Colonic mucosa (tissue), 4 donors: ENCODE measurements at regions of chr1 and their contacts with region 1.

Region 1: DNA sequence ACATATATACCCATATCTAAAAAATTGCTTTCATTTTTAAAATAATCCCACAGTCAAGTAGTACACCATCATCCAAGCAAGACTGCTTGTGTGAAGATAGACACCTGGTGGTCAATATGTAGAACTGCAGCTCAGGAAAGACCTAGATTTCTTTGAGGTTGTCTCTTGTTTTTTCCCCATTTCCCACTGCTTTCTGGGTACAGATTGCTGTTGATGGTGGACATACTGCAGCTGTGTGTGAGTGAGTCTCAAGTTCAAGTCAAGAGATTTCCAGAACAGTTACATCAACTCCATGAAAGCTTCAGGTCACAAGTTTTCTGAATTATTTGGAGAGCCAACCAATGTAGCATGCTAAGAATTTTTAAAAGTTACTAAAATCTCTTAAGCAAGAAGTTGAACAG is 306.4 kb downstream of the DUSP10 start:
- DNase-seq: no peak
- H3K4me3 ChIP-seq: no peak overlapping the region
- H3K27ac ChIP-seq: no peak overlapping the region
- H3K4me1 ChIP-seq: no peaks in the 10 kb centered on the region
- H3K27me3 ChIP-seq: no peaks in the 10 kb centered on the region
- CTCF ChIP-seq: peak; percentile 91

Region 2: GRCh38 chr1:220810179-220810653 is 625.3 kb before region 1 on chr1:
- intact Hi-C with region 1: loop called (anchors 10 kb)
- DNase-seq: peak; percentile 71
- H3K4me3 ChIP-seq: no peak overlapping the region
- H3K27ac ChIP-seq: no peak overlapping the region
- H3K4me1 ChIP-seq: no peaks in the 10 kb centered on the region
- H3K27me3 ChIP-seq: no peaks in the 10 kb centered on the region
- CTCF ChIP-seq: peak; percentile 83

Region 3: GRCh38 chr1:220879076-220879508 is 556.4 kb before region 1 on chr1 and contains the start of gene HLX:
- intact Hi-C with region 1: loop called (anchors 10 kb)
- DNase-seq: peak; percentile 80
- H3K4me3 ChIP-seq: peak within 1 kb of the TSS; percentile 54
- H3K27ac ChIP-seq: peak within 1 kb of the TSS; percentile 90
- H3K4me1 ChIP-seq: peaks cover 3% of the 10 kb centered on the region
- H3K27me3 ChIP-seq: peaks cover 48% of the 10 kb centered on the region
- CTCF ChIP-seq: no peak
- total RNA-seq, gene HLX: 1.7 to 6.2 TPM

Region 4: DNA sequence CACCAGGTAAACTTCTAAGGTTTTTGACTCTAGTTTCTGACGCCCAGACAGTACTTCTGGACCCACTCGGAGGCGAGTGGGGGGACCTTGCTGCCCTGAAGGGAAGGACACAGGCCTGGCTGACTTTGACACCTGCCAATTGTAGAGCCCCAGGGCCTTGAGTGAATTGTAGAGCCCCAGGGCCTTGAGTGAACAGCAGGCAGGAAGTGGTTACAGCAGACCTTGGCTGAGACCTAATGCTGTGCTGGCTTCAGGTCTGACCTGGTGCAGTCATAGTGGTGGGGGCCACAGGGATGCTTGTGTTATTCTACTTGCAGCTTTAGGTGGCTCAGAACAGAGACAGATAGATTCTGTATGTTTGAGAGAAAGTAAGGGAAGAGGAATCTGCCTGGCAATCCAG is 37.9 kb before region 1 on chr1:
- intact Hi-C with region 1: no loop called
- DNase-seq: no peak
- H3K4me3 ChIP-seq: no peak overlapping the region
- H3K27ac ChIP-seq: no peak overlapping the region
- H3K4me1 ChIP-seq: no peaks in the 10 kb centered on the region
- H3K27me3 ChIP-seq: no peaks in the 10 kb centered on the region
- CTCF ChIP-seq: no peak